BJ (cell line): ENCODE measurements at regions of chr9 and their contacts with region 1.

Region 1: DNA sequence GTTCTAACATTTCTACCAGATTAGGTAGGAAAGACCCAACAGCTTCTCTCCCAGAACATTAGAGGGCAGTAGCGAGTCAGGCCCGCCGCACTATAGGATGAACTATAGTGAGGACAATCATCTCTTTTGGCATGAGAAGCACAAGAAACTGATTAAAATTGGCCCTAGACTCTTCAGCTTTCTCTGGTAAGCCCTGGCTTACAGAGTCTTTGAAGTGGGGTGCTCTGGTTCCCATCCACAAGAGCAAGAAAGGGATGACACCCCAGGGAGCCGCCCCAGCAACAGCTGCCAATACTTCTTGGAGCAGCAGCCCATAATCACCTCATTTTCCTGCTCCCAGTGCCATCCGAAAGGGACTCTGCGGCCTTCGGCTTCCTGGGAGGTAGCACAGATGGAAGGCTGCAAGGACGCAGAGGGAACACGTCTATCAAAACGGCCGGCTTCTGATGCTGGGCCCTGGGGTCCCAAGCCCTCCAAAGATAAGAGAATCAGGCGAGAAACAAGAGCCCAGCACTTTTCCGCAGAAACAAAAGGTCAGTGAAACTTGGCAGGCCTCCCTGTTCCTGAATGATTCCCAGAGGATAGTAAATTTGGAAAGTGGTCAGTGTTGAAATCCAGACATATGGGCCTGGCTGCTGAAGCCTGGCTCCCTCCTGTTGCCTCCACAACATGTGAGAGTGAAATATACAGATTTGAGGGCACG is 69.3 kb downstream of the HSD17B3 start:
- DNase-seq: no peak
- H3K4me3 ChIP-seq: no peak overlapping the region
- H3K27me3 ChIP-seq: 0 out of 2 replicates have a peak, but pooled peaks cover 1% of the 10 kb centered on the region
- CTCF ChIP-seq: peak; percentile 96

Region 2: GRCh38 chr9:96020792-96021550 is 211.7 kb before region 1 on chr9:
- CTCF ChIA-PET with region 1: no interaction called
- POLR2A ChIA-PET with region 1: no interaction called
- DNase-seq: no peak
- H3K4me3 ChIP-seq: peak overlapping the region; percentile 48
- H3K27me3 ChIP-seq: peaks cover 29% of the 10 kb centered on the region
- CTCF ChIP-seq: no peak

Region 3: DNA sequence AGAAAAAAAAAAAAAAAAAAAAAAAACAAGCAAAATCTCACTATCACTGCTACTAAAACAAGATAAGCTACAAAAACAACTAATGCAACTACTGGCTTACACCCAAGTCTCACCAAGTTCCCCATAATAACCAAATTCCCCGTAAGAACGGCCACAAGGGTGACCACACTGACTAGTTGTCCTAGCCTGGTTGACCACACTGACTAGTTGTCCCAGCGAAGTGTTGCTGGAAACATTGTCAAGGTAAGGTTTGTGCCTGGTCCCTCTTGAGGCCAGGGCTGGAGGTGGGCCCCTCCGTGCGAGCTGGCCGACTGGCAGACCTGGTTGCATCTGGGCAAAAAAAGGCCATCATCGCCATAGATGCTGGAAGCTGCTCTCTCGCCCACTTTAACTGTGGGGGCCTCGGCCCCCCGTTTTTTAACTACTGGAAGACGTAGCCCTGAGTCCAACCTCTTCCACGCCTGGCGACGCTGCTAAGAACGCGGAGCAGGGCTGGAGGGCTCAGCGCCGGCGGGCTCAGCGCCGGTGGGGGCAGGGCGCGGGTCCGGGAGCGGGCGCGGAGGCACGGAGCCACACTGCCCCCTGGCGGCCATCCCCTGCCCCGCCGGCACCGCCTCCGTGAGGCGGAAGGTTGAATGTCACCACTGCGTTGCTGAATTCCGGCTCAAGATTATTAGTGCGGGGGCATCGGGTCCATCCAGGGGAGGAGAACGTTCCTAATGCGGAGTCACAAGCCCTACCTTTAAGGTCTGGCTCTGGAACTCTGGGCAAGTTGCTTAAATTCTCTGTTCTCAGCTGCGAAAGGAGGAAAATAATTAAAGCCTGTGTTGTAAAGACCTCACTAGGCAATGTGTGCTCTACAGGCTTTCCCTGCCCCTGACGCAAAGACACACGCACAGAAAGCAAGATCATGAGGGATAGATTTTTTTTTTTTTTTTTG is 14.7 kb before region 1 on chr9:
- CTCF ChIA-PET with region 1: interaction called, 21 read pairs
- POLR2A ChIA-PET with region 1: no interaction called
- DNase-seq: no peak
- H3K4me3 ChIP-seq: peak overlapping the region; percentile 33
- H3K27me3 ChIP-seq: peaks cover 5% of the 10 kb centered on the region
- CTCF ChIP-seq: peak; percentile 82

Region 4: GRCh38 chr9:96245399-96245798 is 12.7 kb after region 1 on chr9:
- CTCF ChIA-PET with region 1: interaction called, 22 read pairs
- POLR2A ChIA-PET with region 1: no interaction called
- DNase-seq: no peak
- H3K4me3 ChIP-seq: no peak overlapping the region
- H3K27me3 ChIP-seq: no peaks in the 10 kb centered on the region; the same call in 1 of the 2 replicates
- CTCF ChIP-seq: no peak

Region 5: GRCh38 chr9:96304230-96304629 is 71.5 kb after region 1 on chr9:
- CTCF ChIA-PET with region 1: no interaction called
- POLR2A ChIA-PET with region 1: no interaction called
- DNase-seq: no peak
- H3K4me3 ChIP-seq: no peak overlapping the region
- H3K27me3 ChIP-seq: no peaks in the 10 kb centered on the region
- CTCF ChIP-seq: no peak

Region 6: DNA sequence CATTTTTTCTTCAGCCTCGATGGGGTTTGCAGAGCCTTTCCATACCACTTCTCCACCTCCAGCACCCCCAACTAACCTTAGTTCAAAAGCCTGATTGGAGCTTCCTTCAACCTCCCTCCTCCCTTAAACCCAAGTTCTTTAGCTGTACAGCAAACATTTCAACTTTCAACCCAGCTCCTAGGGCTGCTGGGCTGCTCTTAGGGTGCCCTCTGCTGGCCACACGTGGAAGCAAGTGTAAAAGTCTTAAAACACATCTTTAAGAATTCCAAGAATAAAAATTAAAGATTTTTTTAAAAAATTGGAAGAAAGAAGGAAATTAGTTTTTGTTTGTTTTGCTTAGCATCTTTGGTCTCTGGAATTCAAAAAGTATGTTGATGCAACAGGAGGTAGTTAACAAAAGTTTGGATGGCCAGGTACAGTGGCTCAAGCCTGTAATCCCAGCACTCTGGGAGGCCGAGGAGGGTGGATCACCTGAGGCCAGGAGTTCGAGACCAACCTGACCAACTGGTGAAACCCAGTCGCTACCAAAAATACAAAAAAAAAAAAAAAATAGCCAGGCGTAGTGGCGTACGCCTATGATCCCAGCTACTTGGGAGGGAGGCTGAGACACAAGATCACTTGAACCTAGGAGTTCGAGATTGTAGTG is 84.8 kb after region 1 on chr9:
- CTCF ChIA-PET with region 1: interaction called, 29 read pairs
- POLR2A ChIA-PET with region 1: no interaction called
- DNase-seq: no peak
- H3K4me3 ChIP-seq: no peak overlapping the region
- H3K27me3 ChIP-seq: no peaks in the 10 kb centered on the region
- CTCF ChIP-seq: peak; percentile 90

Region 7: DNA sequence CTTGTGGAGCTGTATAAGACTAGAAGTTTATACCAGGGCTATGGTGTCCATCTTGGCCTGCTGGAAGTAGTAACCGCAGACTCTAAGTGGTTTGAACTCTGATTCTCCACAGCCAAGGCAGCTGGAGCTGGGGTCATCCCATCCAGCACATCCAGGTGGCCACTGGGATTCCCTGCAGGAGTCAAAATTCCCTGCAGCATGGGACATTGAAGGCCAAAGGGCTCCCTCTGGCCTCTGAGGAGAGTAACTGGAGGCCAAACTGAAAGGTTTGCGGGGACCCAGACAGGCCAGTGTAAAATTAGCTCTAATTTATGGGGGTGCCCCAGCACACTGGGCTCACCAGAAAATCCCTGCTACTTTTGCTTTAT is 434.7 kb after region 1 on chr9:
- CTCF ChIA-PET with region 1: interaction called, 25 read pairs
- POLR2A ChIA-PET with region 1: no interaction called
- DNase-seq: no peak
- H3K4me3 ChIP-seq: no peak overlapping the region
- H3K27me3 ChIP-seq: no peaks in the 10 kb centered on the region
- CTCF ChIP-seq: no peak